ENCODE measurements at regions of chr2 and their contacts with region 1.

Region 1: DNA sequence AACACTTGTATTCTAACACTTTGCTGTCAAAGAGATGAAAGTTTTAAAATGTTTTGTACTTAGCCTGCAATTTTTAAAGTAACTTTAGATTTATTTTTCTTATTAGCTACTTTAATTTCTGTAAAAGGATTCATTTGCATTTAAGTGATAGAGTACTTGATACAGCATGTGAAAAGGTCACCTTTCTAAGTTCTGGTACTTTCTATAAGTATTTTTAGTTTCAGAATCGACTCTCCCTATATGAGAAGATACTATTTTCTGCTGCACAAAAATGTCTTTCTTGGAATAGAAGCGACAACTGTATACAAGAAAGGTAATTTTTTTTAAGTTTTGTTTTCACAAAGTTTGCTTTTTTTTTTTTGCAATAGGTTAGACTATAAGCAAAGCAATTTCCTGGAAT is 72.9 kb downstream of the METTL8 start:
- DNase-seq: no peak
- H3K4me3 ChIP-seq: no peak overlapping the region
- H3K27ac ChIP-seq: no peak overlapping the region
- H3K4me1 ChIP-seq: peaks cover 10% of the 10 kb centered on the region
- H3K27me3 ChIP-seq: no peaks in the 10 kb centered on the region
- CTCF ChIP-seq: no peak

Region 2: GRCh38 chr2:171260471-171261424 is 100.2 kb before region 1 on chr2:
- CTCF ChIA-PET with region 1: interaction called, 32 read pairs
- dilution Hi-C with region 1: no loop called
- in situ Hi-C with region 1: no loop called
- intact Hi-C with region 1: no loop called
- DNase-seq: no peak
- H3K4me3 ChIP-seq: no peak overlapping the region
- H3K27ac ChIP-seq: no peak overlapping the region
- H3K4me1 ChIP-seq: no peaks in the 10 kb centered on the region
- H3K27me3 ChIP-seq: no peaks in the 10 kb centered on the region
- CTCF ChIP-seq: no peak

Measured in mammary epithelial cell (primary cell).